PC-3 (cell line): ENCODE measurements at regions of chr2 and their contacts with region 1.

Region 1: GRCh38 chr2:74529357-74530238 is at the starts of genes AUP1 and HTRA2:
- DNase-seq: peak; percentile 99
- ATAC-seq: peak; percentile 93
- H3K4me3 ChIP-seq: peak within 1 kb of the TSS; percentile 93
- H3K27ac ChIP-seq: peak within 1 kb of the TSS; percentile 63
- H3K4me1 ChIP-seq: peaks cover 20% of the 10 kb centered on the region
- H3K27me3 ChIP-seq: no peaks in the 10 kb centered on the region
- CTCF ChIP-seq: no peak
- total RNA-seq, gene AUP1: 218 and 233 TPM in 2 replicates
- total RNA-seq, gene HTRA2: 71.8 and 77.5 TPM in 2 replicates

Region 2: DNA sequence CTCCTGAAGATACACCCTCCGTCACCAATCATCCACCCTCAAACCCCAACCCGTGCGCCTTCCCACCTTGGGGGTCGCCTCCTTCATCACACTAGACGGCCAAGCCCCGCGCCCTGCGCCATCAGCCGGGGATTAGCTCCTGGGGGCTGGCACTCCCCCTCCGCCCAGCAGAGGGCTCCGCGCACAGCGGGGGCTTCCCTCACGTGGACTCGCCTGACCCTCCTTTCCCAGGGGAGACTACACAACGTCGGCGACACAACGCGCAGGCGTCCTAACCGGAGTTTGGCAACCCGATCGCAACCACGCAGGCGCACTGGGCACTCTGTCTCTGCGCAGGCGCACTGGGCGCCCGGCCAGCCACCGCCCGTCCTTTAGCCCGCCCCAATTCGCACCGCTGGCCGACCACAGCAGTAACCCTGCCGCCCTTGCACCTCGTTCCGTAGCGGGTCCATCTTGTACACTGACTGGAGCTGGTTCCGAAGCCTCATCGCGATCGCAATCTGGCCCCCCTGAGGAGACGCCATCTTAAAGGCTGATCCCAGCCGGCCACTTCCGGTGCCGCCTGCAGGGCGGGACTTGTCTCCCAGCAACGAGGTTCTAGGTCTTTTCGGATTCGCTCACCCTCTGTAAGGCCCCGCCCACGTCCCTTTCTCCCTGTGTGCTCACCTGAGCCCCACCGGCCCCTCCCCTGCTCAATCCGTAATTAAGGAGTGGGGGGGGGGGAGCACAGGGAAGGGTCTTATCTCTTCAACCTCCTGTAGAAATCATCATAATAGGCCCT is 22.3 kb before region 1 on chr2 and contains the start of gene PCGF1:
- CTCF ChIA-PET with region 1: no interaction called
- POLR2A ChIA-PET with region 1: no interaction called
- intact Hi-C with region 1: loop called (anchors 1 kb)
- DNase-seq: peak; percentile 99
- ATAC-seq: peak; percentile 93
- H3K4me3 ChIP-seq: peak within 1 kb of the TSS; percentile 95
- H3K27ac ChIP-seq: peak within 1 kb of the TSS; percentile 94
- H3K4me1 ChIP-seq: peaks cover 18% of the 10 kb centered on the region
- H3K27me3 ChIP-seq: no peaks in the 10 kb centered on the region
- CTCF ChIP-seq: 0 out of 2 replicates have a peak, but pooled peaks have one; percentile 17
- total RNA-seq, gene PCGF1: 31.2 and 35.7 TPM in 2 replicates

Region 3: DNA sequence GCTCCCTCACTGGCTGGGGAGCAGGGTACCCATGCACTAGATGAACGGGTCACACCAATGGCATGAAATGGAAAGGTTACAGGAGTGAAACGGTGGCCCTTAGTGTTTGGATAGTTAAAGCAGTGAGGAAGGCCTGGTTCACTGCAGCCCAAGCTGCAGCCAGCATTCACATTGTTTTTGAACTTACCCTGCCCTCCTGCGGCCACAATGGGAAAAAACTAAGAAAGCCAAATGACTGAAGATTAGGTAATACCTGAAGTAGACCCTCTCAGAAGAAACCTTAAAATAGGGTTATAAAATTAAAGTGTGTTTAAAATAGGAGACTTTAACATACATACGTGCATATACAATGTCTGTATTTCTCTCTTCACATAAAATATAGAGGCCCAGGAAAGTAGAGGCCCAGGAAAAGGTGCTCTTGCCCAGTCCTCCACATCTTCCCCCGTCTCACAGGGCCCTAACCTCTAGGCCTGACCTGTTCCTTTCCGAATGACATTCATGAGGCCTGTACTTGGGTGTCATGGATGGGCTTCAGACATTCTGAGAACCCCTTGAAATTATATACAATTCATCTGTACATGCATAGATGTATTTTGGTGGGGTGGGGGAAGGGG is 58.2 kb after region 1 on chr2:
- CTCF ChIA-PET with region 1: no interaction called
- POLR2A ChIA-PET with region 1: no interaction called
- intact Hi-C with region 1: loop called (anchors 5 kb)
- DNase-seq: peak; percentile 83
- ATAC-seq: peak; percentile 90
- H3K4me3 ChIP-seq: no peak overlapping the region
- H3K27ac ChIP-seq: no peak overlapping the region
- H3K4me1 ChIP-seq: peaks cover 19% of the 10 kb centered on the region
- H3K27me3 ChIP-seq: no peaks in the 10 kb centered on the region
- CTCF ChIP-seq: peak; percentile 84

Region 4: DNA sequence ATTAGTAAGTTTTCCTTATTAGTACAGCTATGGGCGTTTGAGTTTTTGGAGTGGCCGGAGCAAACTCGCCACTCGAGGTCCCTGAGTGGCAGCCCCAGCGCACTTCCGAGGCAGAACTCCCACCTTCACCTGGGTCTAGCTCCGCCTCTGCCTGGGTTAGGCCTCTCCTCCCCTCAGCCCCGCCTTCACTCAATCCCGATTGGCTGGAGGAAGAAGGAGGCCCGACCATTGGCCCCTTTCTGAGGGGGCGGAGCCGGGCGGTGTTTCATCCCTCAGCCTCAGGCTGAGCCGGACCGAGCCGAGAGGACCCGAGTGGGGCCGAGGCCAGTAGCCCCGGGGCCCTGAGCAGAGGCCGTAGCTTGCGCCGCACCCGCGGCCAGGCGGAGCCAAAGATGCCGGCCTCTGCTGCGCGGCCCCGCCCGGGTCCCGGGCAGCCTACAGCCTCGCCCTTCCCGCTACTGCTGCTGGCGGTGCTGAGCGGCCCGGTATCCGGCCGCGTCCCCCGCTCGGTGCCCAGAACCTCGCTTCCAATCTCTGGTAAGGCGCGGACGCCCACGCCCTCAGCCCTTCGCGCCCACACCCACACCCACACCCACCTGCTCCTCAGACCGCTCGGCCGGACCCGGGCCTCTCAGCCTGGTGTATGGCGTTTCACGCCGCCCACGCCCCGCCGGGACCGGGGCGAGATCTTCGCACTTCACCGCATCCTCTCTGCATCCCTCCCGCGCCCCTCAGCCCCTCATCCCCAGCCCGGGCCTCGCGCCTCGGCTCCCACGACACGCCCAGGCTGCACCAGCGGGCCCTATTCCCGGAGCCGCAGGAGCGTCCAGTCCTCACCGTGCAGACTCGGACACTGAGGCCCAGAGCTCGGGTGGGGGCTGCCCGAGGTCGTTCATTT is 124.6 kb after region 1 on chr2 and contains the start of gene SEMA4F:
- CTCF ChIA-PET with region 1: no interaction called
- POLR2A ChIA-PET with region 1: no interaction called
- intact Hi-C with region 1: no loop called
- DNase-seq: peak; percentile 98
- ATAC-seq: peak; percentile 99
- H3K4me3 ChIP-seq: peak within 1 kb of the TSS; percentile 82
- H3K27ac ChIP-seq: no peak within 1 kb of the TSS
- H3K4me1 ChIP-seq: peaks cover 7% of the 10 kb centered on the region
- H3K27me3 ChIP-seq: no peaks in the 10 kb centered on the region
- CTCF ChIP-seq: no peak
- total RNA-seq, gene SEMA4F: 7.6 and 13.9 TPM in 2 replicates